GM18951 (cell line): ENCODE measurements at regions of chr4 and their contacts with region 1.

Region 1: DNA sequence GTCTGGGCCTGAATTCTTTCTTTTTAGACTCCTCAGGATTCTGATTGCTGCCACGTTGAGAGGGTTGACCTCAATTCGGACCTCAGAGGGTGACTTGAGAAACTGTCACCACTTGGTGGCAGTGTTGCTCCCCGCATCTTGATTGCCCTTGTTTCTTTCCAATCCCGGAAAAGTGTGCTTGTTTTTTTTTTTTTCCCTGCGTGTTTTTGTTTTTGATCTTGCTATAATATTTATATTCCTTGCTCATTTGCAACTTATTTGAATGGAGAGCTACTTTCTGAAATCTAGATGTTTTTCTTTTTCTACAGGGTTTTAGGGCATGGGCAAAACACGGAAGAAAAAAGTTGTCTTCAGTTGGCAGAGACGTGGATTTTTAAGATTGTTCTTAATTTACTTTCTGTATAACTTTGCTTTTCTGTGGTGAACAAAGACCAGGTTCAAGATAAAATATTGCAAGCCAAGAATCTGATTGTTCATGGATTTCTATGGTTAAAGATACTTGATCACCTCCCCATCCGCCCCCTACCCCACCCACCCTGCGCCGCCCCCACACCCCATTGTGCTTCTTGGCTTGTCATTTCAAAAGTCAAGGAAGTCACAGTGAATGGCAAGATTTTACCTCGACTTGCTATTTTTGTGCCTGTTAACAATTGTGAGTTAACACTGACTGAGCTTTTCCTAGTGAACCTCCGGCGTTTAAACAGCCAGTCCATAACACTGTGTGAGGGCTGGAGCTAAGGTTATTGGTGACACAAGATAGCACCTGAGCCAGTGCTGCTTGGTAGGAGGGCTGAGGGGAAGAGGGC is 102.1 kb downstream of the PTTG2 start:
- POLR2A ChIP-seq: no peak

Region 2: GRCh38 chr4:38675146-38676121 is 613.1 kb after region 1 on chr4:
- in situ Hi-C with region 1: loop called (anchors 25 kb)
- POLR2A ChIP-seq: no peak

Region 3: DNA sequence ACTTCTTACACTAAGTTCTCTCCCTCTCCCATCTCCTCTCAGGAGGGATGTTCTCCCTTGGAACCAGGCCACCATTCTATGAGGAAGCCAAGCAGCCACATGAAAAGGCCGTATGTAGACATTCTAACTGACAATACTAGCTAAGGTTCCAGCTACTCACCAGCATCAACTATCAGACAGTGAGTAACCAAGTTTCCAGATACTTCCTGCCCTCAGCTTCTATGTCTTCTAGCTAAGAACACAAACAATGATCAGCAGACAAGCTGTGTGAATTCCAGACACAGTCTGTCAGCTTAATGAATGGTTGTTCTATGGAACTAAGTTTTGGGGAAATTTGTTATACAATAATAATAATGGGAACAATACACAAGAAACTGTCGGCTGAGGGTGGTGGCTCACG is 1525.6 kb after region 1 on chr4:
- in situ Hi-C with region 1: no loop called
- POLR2A ChIP-seq: no peak